ENCODE measurements at regions of chr7 and their contacts with region 1.

Region 1: DNA sequence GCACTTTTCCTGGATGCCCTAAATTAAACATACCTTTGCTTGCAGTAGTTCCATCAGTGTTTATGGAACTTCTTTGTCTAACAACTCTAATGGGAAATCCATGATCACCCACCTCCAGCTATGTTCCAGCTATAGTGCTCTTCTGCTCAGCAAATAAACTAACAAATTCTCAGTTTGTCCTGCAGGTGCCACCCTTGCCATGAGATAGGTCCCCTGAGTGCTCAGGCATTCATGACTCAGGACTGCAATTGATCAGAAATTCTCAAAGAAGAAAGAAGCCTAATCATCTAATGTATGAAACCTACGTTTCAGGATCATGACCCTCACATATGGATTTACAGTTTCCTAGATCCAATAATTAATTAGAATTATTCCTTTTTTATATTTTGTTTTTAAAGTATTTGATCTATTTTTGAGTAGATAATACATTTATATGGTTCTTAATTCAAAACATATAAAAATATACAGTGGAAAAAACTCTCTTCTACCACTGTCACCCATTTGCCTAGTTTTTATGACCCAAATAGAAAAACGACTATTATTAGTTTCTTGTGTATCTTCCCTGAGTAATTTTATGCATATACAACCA is 48.7 kb upstream of the DYNC1I1 start:
- DNase-seq: peak; percentile 53
- ATAC-seq: peak; percentile 95
- H3K4me3 ChIP-seq: no peak overlapping the region
- H3K27ac ChIP-seq: no peak overlapping the region
- H3K4me1 ChIP-seq: peaks cover 8% of the 10 kb centered on the region; the same call in 1 of the 2 replicates
- H3K27me3 ChIP-seq: no peaks in the 10 kb centered on the region
- CTCF ChIP-seq: peak; percentile 71
- EP300 ChIP-seq: no peak
- POLR2A ChIP-seq: no peak
- RAD21 ChIP-seq: peak; percentile 47; the same call in 1 of the 2 replicates

Region 2: DNA sequence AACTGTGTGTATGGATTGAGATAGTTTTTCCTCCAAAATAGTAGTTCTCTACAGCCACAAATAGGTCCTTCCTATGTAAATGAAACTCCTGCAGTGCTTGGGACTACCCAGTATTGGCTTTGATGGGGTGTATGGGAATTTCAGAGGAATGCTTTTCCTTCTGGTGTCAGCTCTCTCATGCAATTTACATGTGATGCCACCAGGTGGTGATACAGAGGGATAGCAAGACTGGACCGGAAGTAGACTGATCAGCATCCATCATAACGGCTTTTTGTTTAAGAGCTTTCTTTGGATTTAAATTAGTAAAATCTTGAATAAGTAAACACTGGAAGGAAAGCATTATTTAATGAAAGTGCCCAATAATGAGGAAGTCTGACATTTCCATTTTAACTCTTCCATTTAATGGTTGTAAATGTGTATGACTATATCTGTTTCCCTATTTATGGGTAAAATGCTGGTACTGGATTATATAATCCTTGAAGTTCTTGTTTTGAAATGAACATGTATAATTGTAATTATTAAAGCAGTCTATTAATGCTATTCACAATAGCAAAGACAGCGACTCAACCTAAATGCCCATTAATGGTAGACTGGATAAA is 71.3 kb after region 1 on chr7:
- CTCF ChIA-PET with region 1: no interaction called
- POLR2A ChIA-PET with region 1: no interaction called
- in situ Hi-C with region 1: no loop called
- intact Hi-C with region 1: loop called (anchors 1 kb)
- DNase-seq: peak; percentile 24
- ATAC-seq: peak; percentile 62; the same call in 2 of the 3 replicates
- H3K4me3 ChIP-seq: no peak overlapping the region
- H3K27ac ChIP-seq: no peak overlapping the region
- H3K4me1 ChIP-seq: no peaks in the 10 kb centered on the region
- H3K27me3 ChIP-seq: no peaks in the 10 kb centered on the region
- CTCF ChIP-seq: peak; percentile 50
- EP300 ChIP-seq: no peak
- POLR2A ChIP-seq: no peak
- RAD21 ChIP-seq: no peak

Region 3: GRCh38 chr7:95817866-95818640 is 94.4 kb after region 1 on chr7:
- CTCF ChIA-PET with region 1: no interaction called
- POLR2A ChIA-PET with region 1: no interaction called
- in situ Hi-C with region 1: no loop called
- intact Hi-C with region 1: no loop called
- DNase-seq: no peak
- ATAC-seq: no peak
- H3K4me3 ChIP-seq: no peak overlapping the region
- H3K27ac ChIP-seq: no peak overlapping the region
- H3K4me1 ChIP-seq: no peaks in the 10 kb centered on the region
- H3K27me3 ChIP-seq: peaks cover 0 to 3% of the 10 kb centered on the region in 2 experiments; a peak in 1 of 5 replicates
- CTCF ChIP-seq: no peak
- EP300 ChIP-seq: no peak
- POLR2A ChIP-seq: no peak
- RAD21 ChIP-seq: no peak

Region 4: GRCh38 chr7:95865716-95866371 is 142.2 kb after region 1 on chr7:
- CTCF ChIA-PET with region 1: interaction called, 26 read pairs
- POLR2A ChIA-PET with region 1: no interaction called
- in situ Hi-C with region 1: loop called (anchors 5 kb)
- intact Hi-C with region 1: loop called (anchors 1 kb)
- DNase-seq: peak; percentile 25
- ATAC-seq: peak; percentile 74
- H3K4me3 ChIP-seq: no peak overlapping the region
- H3K27ac ChIP-seq: no peak overlapping the region
- H3K4me1 ChIP-seq: no peaks in the 10 kb centered on the region
- H3K27me3 ChIP-seq: no peaks in the 10 kb centered on the region
- CTCF ChIP-seq: peak; percentile 59
- EP300 ChIP-seq: no peak
- POLR2A ChIP-seq: no peak
- RAD21 ChIP-seq: no peak

Region 5: GRCh38 chr7:95871078-95871782 is 147.5 kb after region 1 on chr7:
- CTCF ChIA-PET with region 1: interaction called, 26 read pairs
- POLR2A ChIA-PET with region 1: no interaction called
- in situ Hi-C with region 1: loop called (anchors 5 kb)
- intact Hi-C with region 1: loop called (anchors 1 kb)
- DNase-seq: peak; percentile 43
- ATAC-seq: peak; percentile 71
- H3K4me3 ChIP-seq: no peak overlapping the region
- H3K27ac ChIP-seq: no peak overlapping the region
- H3K4me1 ChIP-seq: no peaks in the 10 kb centered on the region
- H3K27me3 ChIP-seq: no peaks in the 10 kb centered on the region
- CTCF ChIP-seq: peak; percentile 68
- EP300 ChIP-seq: no peak
- POLR2A ChIP-seq: no peak
- RAD21 ChIP-seq: peak; percentile 37; the same call in 1 of the 2 replicates

Measured in HepG2 (cell line).